ENCODE measurements at regions of chr1 and their contacts with region 1.

Region 1: GRCh38 chr1:235067263-235068172 is 61.1 kb downstream of the TOMM20 start:
- DNase-seq: peak; percentile 94
- ATAC-seq: peak; percentile 92
- H3K4me3 ChIP-seq: peak overlapping the region in 1 of 2 experiments; percentile 31; a peak in 2 of 4 replicates
- H3K27ac ChIP-seq: peak overlapping the region; percentile 24; the same call in 1 of the 2 replicates
- H3K4me1 ChIP-seq: peaks cover 23 to 43% of the 10 kb centered on the region in 2 experiments
- H3K27me3 ChIP-seq: peaks cover 17% of the 10 kb centered on the region; the same call in 1 of the 2 replicates
- CTCF ChIP-seq: no peak
- POLR2A ChIP-seq: no peak
- RAD21 ChIP-seq: peak; percentile 34

Region 2: DNA sequence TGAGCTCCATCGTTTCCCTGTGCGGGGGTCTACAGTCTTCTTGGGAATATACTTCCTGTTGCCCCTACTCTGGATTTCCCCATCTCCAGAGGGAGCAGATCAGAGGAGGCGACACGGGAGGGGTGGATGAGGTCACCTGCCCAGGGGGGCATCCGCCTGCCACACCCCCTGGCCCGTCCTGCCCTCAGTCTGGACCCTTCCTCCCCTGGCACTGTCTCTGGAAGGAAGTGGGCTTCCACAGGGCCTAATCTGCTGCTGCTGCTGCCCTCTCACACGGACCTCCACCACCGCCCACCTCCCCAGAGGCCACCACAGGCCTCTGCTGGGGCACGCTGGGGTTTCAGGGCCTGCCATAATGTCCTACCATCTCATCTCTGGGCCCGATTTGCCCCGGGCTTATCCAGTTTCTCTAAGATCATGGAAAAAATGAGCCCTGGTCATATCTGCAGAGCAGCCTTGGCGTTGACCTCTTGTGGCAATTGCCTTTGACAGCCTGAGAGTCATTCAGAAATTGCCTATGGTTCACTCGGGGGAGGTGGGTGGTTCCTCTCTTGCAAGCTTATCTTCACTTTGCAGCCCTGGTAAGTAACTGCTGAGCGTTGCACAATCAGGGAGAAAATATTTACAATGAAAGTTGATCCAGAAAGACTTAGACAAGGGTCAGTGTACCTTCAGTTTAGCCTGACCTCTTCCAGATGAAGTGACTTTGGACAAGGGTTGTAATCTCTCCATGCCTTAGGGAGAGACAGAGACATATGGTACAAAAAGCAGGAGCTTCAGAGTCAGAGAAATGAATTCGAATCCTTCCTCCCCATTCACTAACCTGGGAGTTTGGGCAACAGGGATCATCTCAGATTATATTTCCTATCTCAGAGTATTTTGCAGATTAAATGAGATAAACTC is 191.3 kb before region 1 on chr1:
- CTCF ChIA-PET with region 1: no interaction called
- POLR2A ChIA-PET with region 1: no interaction called
- RAD21 ChIA-PET with region 1: no interaction called
- intact Hi-C with region 1: loop called (anchors 10 kb)
- DNase-seq: no peak
- ATAC-seq: no peak
- H3K4me3 ChIP-seq: no peak overlapping the region
- H3K27ac ChIP-seq: no peak overlapping the region
- H3K4me1 ChIP-seq: no peaks in the 10 kb centered on the region
- H3K27me3 ChIP-seq: no peaks in the 10 kb centered on the region
- CTCF ChIP-seq: no peak
- POLR2A ChIP-seq: no peak
- RAD21 ChIP-seq: no peak

Region 3: GRCh38 chr1:235018161-235018560 is 49.4 kb before region 1 on chr1:
- CTCF ChIA-PET with region 1: no interaction called
- POLR2A ChIA-PET with region 1: no interaction called
- RAD21 ChIA-PET with region 1: no interaction called
- intact Hi-C with region 1: loop called (anchors 5 kb)
- DNase-seq: peak; percentile 19
- ATAC-seq: peak; percentile 44; the same call in 1 of the 2 replicates
- H3K4me3 ChIP-seq: no peak overlapping the region
- H3K27ac ChIP-seq: no peak overlapping the region
- H3K4me1 ChIP-seq: peaks cover 3 to 9% of the 10 kb centered on the region in 2 experiments; a peak in 2 of 4 replicates
- H3K27me3 ChIP-seq: no peaks in the 10 kb centered on the region
- CTCF ChIP-seq: no peak
- POLR2A ChIP-seq: no peak
- RAD21 ChIP-seq: no peak

Region 4: DNA sequence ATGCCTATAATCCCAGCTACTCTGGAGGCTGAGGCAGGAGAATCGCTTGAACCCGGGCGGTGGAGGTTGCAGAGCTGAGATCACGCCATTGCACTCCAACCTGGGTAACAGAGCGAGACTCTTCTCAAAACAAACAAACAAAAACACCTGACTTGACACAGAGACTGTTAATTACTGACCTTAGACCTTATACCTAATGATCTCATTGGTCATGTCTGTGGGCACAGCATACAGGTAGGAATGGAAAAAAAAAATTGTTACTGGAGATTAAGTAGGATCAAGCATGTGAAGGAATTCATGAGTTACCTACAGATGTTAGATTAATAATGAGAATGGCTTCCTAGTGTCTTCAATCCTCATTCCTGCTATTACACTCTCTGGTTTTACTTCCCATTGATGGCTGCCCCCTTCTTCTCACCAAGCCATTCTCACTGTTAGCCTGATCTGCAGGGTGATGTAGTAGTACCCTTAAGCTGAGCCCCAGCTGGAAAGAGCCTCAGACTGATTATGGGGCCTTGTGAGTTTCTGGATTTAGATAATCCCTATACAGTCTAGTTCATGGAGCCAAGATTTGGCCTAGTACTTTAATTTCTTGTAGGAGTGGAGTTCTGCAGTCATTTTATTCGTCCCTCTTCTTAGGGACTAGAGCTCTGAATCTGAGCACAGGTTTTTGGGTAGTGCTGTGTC is 308.5 kb after region 1 on chr1:
- CTCF ChIA-PET with region 1: no interaction called
- POLR2A ChIA-PET with region 1: no interaction called
- RAD21 ChIA-PET with region 1: no interaction called
- intact Hi-C with region 1: no loop called
- DNase-seq: no peak
- ATAC-seq: no peak
- H3K4me3 ChIP-seq: no peak overlapping the region
- H3K27ac ChIP-seq: no peak overlapping the region
- H3K4me1 ChIP-seq: no peaks in the 10 kb centered on the region
- H3K27me3 ChIP-seq: no peaks in the 10 kb centered on the region
- CTCF ChIP-seq: no peak
- POLR2A ChIP-seq: no peak
- RAD21 ChIP-seq: no peak